CD8-positive, alpha-beta T cell (primary cell): ENCODE measurements at regions of chr10 and their contacts with region 1.

Region 1: GRCh38 chr10:70146489-70147258 is at the start of gene TYSND1:
- DNase-seq: peak; percentile 83 to 97 (median 91)
- ATAC-seq: peak; percentile 80
- H3K4me3 ChIP-seq: peak within 1 kb of the TSS; percentile 76 to 85
- H3K4me3 Mint-ChIP-seq: peak within 1 kb of the TSS; percentile 90
- H3K27ac ChIP-seq: peak within 1 kb of the TSS; percentile 84 to 87
- H3K27ac Mint-ChIP-seq: peak within 1 kb of the TSS; percentile 94
- H3K4me1 ChIP-seq: peaks cover 30% of the 10 kb centered on the region
- H3K4me1 Mint-ChIP-seq: peaks cover 46% of the 10 kb centered on the region
- H3K27me3 ChIP-seq: no peaks in the 10 kb centered on the region
- H3K27me3 Mint-ChIP-seq: no peaks in the 10 kb centered on the region
- CTCF ChIP-seq: peak; percentile 44
- total RNA-seq, gene TYSND1: 9.6 to 10.3 TPM

Region 2: DNA sequence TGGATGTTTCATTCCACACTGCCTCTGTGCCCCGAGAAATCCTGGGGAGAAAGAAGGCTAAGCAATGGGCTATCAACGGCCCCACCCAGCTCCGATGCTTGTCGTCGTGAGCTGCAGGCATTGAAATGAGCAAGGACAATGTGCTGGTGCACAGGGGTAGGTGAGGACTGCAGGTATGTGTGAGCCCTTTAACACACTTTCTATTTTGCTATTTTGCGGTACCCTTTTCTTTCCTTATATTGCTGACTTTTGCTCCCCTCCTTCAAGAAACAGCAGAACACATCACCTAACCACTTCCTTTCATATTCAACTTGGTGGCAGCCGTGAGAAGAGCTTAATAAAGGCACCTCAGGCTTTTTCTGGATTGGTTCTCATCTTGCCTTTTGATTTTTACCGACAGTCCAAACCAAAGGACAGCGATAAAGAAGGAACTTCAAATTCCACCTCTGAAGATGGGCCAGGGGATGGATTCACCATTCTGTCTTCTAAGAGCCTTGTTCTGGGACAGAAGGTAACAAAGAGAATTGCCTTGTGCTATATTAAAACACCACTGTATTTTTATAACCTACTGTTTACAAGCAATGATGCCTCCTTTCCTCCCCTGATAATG is 53.2 kb before region 1 on chr10:
- CTCF ChIA-PET with region 1: interaction called, 19 read pairs
- POLR2A ChIA-PET with region 1: interaction called, 47 read pairs
- intact Hi-C with region 1: loop called (anchors 1 to 2 kb)
- DNase-seq: peak in 7 of 9 experiments; percentile 3 to 73 (median 18)
- ATAC-seq: peak; percentile 68
- H3K4me3 ChIP-seq: peak overlapping the region; percentile 54 to 70
- H3K4me3 Mint-ChIP-seq: peak overlapping the region; percentile 75
- H3K27ac ChIP-seq: peak overlapping the region; percentile 47 to 84
- H3K27ac Mint-ChIP-seq: peak overlapping the region; percentile 95
- H3K4me1 ChIP-seq: peaks cover 35% of the 10 kb centered on the region
- H3K4me1 Mint-ChIP-seq: peaks cover 62% of the 10 kb centered on the region
- H3K27me3 ChIP-seq: no peaks in the 10 kb centered on the region
- H3K27me3 Mint-ChIP-seq: no peaks in the 10 kb centered on the region
- CTCF ChIP-seq: no peak

Region 3: DNA sequence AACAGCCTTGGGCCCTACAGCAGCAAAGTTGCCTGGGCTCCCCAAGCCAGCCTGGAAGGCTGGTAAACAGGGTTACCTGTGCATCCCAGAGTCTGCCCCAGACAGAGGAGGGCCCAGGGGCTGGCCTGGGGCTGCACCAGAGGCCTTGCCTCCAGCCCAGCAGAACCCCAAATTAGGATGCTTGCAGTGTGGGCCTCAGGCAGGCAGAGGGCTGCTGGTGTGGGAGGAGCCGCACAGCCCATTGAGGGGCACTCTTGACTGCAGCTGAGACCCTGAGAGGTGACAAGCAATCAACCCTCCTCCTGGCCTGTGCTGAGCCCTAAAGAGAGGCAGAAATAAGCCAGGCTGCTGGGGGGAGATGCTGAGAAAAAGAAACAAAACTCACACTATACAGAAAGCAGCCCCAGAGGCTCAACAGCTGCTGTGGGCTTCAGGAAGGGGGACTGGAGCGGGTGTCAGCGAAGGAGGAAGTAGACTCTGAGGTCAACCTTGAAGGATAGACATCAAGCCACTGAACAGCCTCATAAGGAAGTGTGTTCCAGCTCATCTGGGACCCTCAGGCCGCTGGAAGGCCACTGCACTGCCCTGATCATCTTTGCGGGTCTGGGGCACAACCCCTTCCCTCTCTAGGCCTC is 20.6 kb before region 1 on chr10:
- CTCF ChIA-PET with region 1: interaction called, 3 read pairs
- POLR2A ChIA-PET with region 1: interaction called, 13 read pairs
- intact Hi-C with region 1: no loop called
- DNase-seq: no peak
- ATAC-seq: no peak
- H3K4me3 ChIP-seq: no peak overlapping the region
- H3K4me3 Mint-ChIP-seq: no peak overlapping the region
- H3K27ac ChIP-seq: no peak overlapping the region
- H3K27ac Mint-ChIP-seq: no peak overlapping the region
- H3K4me1 ChIP-seq: no peaks in the 10 kb centered on the region
- H3K4me1 Mint-ChIP-seq: peaks cover 8% of the 10 kb centered on the region
- H3K27me3 ChIP-seq: no peaks in the 10 kb centered on the region
- H3K27me3 Mint-ChIP-seq: no peaks in the 10 kb centered on the region
- CTCF ChIP-seq: no peak

Region 4: GRCh38 chr10:70162892-70163201 is 16.2 kb after region 1 on chr10:
- CTCF ChIA-PET with region 1: interaction called, 36 read pairs
- POLR2A ChIA-PET with region 1: interaction called, 69 read pairs
- intact Hi-C with region 1: no loop called
- DNase-seq: peak in 5 of 9 experiments; percentile 33 to 84 (median 65)
- ATAC-seq: peak; percentile 87
- H3K4me3 ChIP-seq: peak overlapping the region in 1 of 2 experiments; percentile 13
- H3K4me3 Mint-ChIP-seq: peak overlapping the region; percentile 65
- H3K27ac ChIP-seq: peak overlapping the region; percentile 2 to 80
- H3K27ac Mint-ChIP-seq: peak overlapping the region; percentile 74
- H3K4me1 ChIP-seq: peaks cover 61% of the 10 kb centered on the region
- H3K4me1 Mint-ChIP-seq: peaks cover 74% of the 10 kb centered on the region
- H3K27me3 ChIP-seq: no peaks in the 10 kb centered on the region
- H3K27me3 Mint-ChIP-seq: no peaks in the 10 kb centered on the region
- CTCF ChIP-seq: no peak

Region 5: DNA sequence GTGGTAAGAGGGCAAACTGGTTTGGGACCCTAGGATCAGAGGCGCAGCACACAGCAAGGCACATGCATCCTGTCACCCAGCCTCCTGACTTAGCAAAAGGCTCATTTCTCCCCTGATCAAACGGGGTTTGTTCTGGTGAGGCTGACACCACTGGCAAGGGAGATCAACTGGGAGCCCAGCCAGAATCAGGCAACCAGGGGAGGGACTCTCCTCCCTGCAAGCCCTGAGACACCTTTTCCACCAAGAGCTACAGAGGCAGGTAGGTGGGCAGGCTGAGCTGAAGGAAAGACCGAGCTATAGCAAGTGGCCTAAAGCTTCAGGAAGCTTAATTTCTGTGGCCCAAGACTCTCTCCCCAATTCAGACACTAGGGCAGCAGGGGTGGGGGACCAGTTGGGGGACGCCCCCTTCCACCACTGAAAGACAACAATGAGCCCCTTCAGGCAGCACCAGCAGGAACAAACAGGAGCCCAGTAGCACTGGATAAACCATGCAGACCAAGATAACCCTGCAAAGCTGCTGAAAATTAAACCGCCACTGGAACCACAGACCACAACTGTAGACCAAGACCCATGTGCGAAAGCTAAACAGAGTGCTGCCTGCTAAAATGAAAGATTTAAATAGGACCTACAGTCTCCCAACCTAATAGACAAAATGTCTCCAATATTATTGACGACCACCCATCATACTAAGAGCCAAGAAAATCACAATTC is 50.7 kb after region 1 on chr10:
- CTCF ChIA-PET with region 1: interaction called, 35 read pairs
- POLR2A ChIA-PET with region 1: interaction called, 8 read pairs
- intact Hi-C with region 1: loop called (anchors 2 kb)
- DNase-seq: peak in 4 of 9 experiments; percentile 29 to 58 (median 46)
- ATAC-seq: no peak
- H3K4me3 ChIP-seq: no peak overlapping the region
- H3K4me3 Mint-ChIP-seq: peak overlapping the region; percentile 33
- H3K27ac ChIP-seq: peak overlapping the region in 1 of 2 experiments; percentile 50
- H3K27ac Mint-ChIP-seq: peak overlapping the region; percentile 72
- H3K4me1 ChIP-seq: peaks cover 15% of the 10 kb centered on the region
- H3K4me1 Mint-ChIP-seq: peaks cover 31% of the 10 kb centered on the region
- H3K27me3 ChIP-seq: no peaks in the 10 kb centered on the region
- H3K27me3 Mint-ChIP-seq: no peaks in the 10 kb centered on the region
- CTCF ChIP-seq: no peak

Region 6: GRCh38 chr10:70381471-70382421 is 235.1 kb after region 1 on chr10:
- CTCF ChIA-PET with region 1: no interaction called
- POLR2A ChIA-PET with region 1: no interaction called
- intact Hi-C with region 1: loop called in 1 of 2 experiments (anchors 5 kb)
- DNase-seq: peak in 4 of 9 experiments; percentile 20 to 57 (median 30)
- ATAC-seq: peak; percentile 37
- H3K4me3 ChIP-seq: peak overlapping the region; percentile 79 to 86
- H3K4me3 Mint-ChIP-seq: peak overlapping the region; percentile 87
- H3K27ac ChIP-seq: no peak overlapping the region
- H3K27ac Mint-ChIP-seq: no peak overlapping the region
- H3K4me1 ChIP-seq: peaks cover 8% of the 10 kb centered on the region
- H3K4me1 Mint-ChIP-seq: peaks cover 10% of the 10 kb centered on the region
- H3K27me3 ChIP-seq: no peaks in the 10 kb centered on the region
- H3K27me3 Mint-ChIP-seq: peaks cover 2% of the 10 kb centered on the region
- CTCF ChIP-seq: no peak